Activated CD4-positive, alpha-beta T cell treated with anti-CD3 and anti-CD28 coated beads for 36 hours (primary cell): ENCODE measurements at regions of chr5 and their contacts with region 1.

Region 1: DNA sequence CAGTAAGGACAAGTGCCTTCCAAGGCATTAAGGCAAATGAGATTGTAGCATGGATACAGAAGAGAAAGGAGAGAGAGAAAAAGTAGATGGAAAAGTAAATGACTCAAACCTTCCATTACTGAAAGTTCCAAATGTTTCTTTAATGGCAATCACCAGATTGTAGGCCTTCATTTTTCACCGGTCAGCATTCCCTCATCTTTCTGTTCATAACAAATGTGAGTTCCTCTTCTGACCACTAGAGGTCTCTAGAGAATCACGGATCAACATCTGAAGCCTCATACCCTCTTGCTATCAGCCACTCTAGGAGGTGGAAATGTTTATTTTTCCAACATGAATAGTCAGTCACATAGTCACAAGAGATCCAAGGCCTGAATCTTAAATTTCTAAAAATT is 73.6 kb upstream of the RPS23 start:
- DNase-seq: no peak
- ATAC-seq: no peak
- H3K4me3 Mint-ChIP-seq: no peak overlapping the region
- H3K27ac Mint-ChIP-seq: no peak overlapping the region
- H3K4me1 Mint-ChIP-seq: peaks cover 21% of the 10 kb centered on the region
- H3K27me3 Mint-ChIP-seq: no peaks in the 10 kb centered on the region

Region 2: DNA sequence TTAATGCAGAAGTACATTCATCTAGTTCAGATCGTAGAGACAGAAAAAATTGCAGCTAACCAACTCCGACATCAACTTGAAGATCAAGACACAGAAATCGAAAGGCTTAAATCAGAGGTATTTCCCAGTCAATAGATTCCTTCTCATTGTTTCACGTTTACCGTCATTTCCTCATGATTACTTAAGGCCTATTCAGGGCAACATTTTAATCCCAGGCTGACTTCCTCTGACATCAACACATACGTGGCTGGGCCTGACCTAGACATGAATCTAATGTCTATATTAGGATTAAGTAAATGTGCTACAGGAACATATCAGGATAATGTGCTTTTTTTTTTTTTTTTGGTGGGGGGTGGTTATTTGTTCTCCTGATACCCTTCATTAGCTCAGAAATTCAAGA is 1283.7 kb before region 1 on chr5:
- CTCF ChIA-PET with region 1: no interaction called
- POLR2A ChIA-PET with region 1: no interaction called
- intact Hi-C with region 1: no loop called
- DNase-seq: no peak
- ATAC-seq: no peak
- H3K4me3 Mint-ChIP-seq: no peak overlapping the region
- H3K27ac Mint-ChIP-seq: no peak overlapping the region
- H3K4me1 Mint-ChIP-seq: peaks cover 18% of the 10 kb centered on the region
- H3K27me3 Mint-ChIP-seq: no peaks in the 10 kb centered on the region

Region 3: GRCh38 chr5:82364497-82364896 is 12.7 kb after region 1 on chr5:
- CTCF ChIA-PET with region 1: interaction called, 16 read pairs
- POLR2A ChIA-PET with region 1: interaction called, 4 read pairs
- intact Hi-C with region 1: no loop called
- DNase-seq: no peak
- ATAC-seq: no peak
- H3K4me3 Mint-ChIP-seq: no peak overlapping the region
- H3K27ac Mint-ChIP-seq: no peak overlapping the region
- H3K4me1 Mint-ChIP-seq: peaks cover 22% of the 10 kb centered on the region
- H3K27me3 Mint-ChIP-seq: peaks cover 5% of the 10 kb centered on the region

Region 4: DNA sequence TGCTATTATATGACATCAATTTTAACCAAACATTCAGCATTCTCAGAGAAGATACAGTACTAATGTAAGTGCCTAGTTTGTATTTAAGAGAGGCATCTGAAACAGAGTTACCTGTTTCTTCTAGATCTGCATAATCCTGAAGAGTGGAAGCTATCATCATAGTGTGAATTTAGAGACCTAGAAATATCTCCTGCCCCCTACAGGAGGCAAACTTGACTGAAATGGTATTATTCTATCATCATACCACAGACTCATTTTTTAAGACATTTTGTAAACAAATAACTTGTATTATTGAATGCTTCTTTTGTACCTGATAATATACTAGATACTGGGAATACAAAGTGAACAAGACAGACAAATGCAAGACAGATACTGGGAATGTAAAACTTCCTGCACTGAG is 143.2 kb after region 1 on chr5:
- CTCF ChIA-PET with region 1: interaction called, 3 read pairs
- POLR2A ChIA-PET with region 1: no interaction called
- intact Hi-C with region 1: loop called (anchors 1 to 10 kb)
- DNase-seq: no peak
- ATAC-seq: no peak
- H3K4me3 Mint-ChIP-seq: no peak overlapping the region
- H3K27ac Mint-ChIP-seq: no peak overlapping the region
- H3K4me1 Mint-ChIP-seq: no peaks in the 10 kb centered on the region
- H3K27me3 Mint-ChIP-seq: no peaks in the 10 kb centered on the region

Region 5: DNA sequence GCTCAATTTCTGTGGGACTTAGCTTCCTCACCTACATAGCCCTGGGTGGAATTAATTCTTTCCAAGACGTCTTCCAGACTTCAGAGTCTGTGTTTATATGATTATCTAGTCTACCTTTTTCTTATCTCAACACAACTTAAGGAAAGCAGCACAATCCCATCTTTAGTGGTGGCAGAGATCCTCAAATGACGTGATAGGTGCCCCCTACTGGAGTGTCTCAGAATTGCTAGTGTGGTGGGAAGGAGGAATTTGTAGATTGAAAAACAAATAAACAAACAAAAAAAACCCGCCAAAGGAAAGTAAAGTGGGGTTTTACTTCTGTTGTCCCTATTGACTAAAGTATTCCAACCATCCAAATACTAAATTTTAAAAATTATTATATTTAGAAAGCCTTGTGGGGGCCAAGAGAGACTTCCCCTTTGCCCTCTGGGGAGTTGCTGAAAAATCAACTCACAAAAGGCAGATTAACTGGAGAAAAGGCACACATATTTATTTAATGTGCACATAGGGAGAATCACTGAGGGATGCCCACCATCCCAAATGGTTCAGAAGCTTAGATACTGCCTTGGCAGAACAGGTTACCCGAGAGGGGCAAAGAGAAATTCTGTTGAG is 442.2 kb after region 1 on chr5:
- CTCF ChIA-PET with region 1: interaction called, 3 read pairs
- POLR2A ChIA-PET with region 1: no interaction called
- intact Hi-C with region 1: loop called (anchors 1 kb)
- DNase-seq: peak; percentile 62
- ATAC-seq: no peak
- H3K4me3 Mint-ChIP-seq: no peak overlapping the region
- H3K27ac Mint-ChIP-seq: no peak overlapping the region
- H3K4me1 Mint-ChIP-seq: no peaks in the 10 kb centered on the region
- H3K27me3 Mint-ChIP-seq: no peaks in the 10 kb centered on the region

Region 6: GRCh38 chr5:83430130-83431010 is 1078.6 kb after region 1 on chr5:
- CTCF ChIA-PET with region 1: interaction called, 6 read pairs
- POLR2A ChIA-PET with region 1: no interaction called
- intact Hi-C with region 1: loop called (anchors 1 to 2 kb)
- DNase-seq: peak; percentile 75
- ATAC-seq: peak; percentile 81
- H3K4me3 Mint-ChIP-seq: no peak overlapping the region
- H3K27ac Mint-ChIP-seq: no peak overlapping the region
- H3K4me1 Mint-ChIP-seq: no peaks in the 10 kb centered on the region
- H3K27me3 Mint-ChIP-seq: no peaks in the 10 kb centered on the region

Region 7: DNA sequence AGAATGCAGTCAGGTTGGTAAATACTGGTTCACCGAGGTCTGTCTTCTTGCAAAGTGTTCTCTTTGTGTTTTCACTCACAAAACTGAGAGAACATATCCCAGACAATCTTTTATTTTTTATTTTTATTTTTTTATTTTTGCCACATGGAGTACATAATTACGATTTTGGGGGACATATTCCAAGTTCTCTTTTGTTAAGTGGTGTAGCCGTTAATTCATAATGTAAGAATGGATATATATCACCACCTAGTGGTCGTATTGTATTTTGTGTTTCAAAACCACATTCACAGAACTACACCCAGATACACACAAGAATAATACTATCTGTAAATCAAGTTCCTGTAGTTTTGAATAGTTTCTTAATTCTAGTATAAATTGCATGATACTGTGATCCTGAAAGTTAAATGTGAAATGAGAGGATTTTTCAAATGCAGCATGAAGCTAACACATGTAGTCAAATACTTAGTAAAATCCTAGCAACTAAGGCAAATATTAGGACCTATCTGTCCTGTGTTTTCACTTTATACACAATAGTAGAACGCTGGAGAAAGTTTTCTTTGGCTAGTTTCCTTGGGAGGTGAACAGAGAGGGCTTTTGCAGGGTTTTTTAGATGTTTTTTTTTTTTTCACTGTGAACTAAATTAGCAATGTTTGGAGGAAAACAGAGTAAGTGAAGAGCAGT is 1212.5 kb after region 1 on chr5:
- CTCF ChIA-PET with region 1: interaction called, 4 read pairs
- POLR2A ChIA-PET with region 1: no interaction called
- intact Hi-C with region 1: loop called (anchors 1 kb)
- DNase-seq: no peak
- ATAC-seq: no peak
- H3K4me3 Mint-ChIP-seq: no peak overlapping the region
- H3K27ac Mint-ChIP-seq: no peak overlapping the region
- H3K4me1 Mint-ChIP-seq: no peaks in the 10 kb centered on the region
- H3K27me3 Mint-ChIP-seq: peaks cover 9% of the 10 kb centered on the region